ENCODE measurements at regions of chr2 and their contacts with region 1.

Region 1: GRCh38 chr2:86368161-86368824 is 30.9 kb upstream of the REEP1 start:
- DNase-seq: peak in 13 of 14 experiments; percentile 8 to 76 (median 28)
- ATAC-seq: peak; percentile 74
- H3K4me3 ChIP-seq: peak overlapping the region; percentile 9
- H3K4me3 Mint-ChIP-seq: peak overlapping the region; percentile 38
- H3K27ac ChIP-seq: no peak overlapping the region
- H3K27ac Mint-ChIP-seq: peak overlapping the region; percentile 22
- H3K4me1 ChIP-seq: peaks cover 32% of the 10 kb centered on the region
- H3K4me1 Mint-ChIP-seq: peaks cover 64% of the 10 kb centered on the region
- H3K27me3 ChIP-seq: no peaks in the 10 kb centered on the region
- H3K27me3 Mint-ChIP-seq: no peaks in the 10 kb centered on the region
- CTCF ChIP-seq: peak; percentile 70

Region 2: DNA sequence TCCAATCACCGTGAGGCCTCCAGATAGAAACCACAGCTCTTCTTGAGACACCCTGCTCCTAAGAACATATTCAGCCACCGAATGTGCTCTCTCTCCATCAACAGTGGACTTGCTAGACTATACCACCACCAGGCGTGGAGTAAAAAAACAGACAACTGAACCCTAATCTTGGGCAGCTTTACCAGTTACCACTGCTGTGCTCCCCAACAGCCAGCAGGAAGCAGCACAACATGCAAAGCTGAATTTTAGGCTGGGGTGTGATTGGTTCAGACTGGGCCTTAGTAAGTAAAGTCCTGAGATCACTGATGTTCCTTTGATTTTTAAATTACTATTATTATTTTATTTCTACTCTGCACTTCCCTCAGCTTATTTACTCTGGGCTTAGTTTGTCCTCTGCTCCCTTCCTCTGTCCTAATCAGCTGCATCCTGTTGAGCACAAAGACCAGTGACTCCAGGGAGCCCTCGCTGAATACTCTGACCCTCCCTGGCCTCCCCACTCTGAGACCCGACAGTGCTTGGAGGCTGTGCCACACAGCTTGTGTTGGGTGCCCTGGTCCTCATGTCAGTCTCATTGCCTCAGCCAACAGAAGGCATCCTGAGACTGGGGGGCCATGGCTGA is 147.1 kb before region 1 on chr2:
- CTCF ChIA-PET with region 1: interaction called, 3 read pairs
- POLR2A ChIA-PET with region 1: interaction called, 5 read pairs
- intact Hi-C with region 1: loop called (anchors 1 to 2 kb)
- DNase-seq: peak in 13 of 14 experiments; percentile 17 to 77 (median 47)
- ATAC-seq: peak; percentile 69
- H3K4me3 ChIP-seq: no peak overlapping the region
- H3K4me3 Mint-ChIP-seq: no peak overlapping the region
- H3K27ac ChIP-seq: no peak overlapping the region
- H3K27ac Mint-ChIP-seq: no peak overlapping the region
- H3K4me1 ChIP-seq: peaks cover 18% of the 10 kb centered on the region
- H3K4me1 Mint-ChIP-seq: peaks cover 28% of the 10 kb centered on the region
- H3K27me3 ChIP-seq: no peaks in the 10 kb centered on the region
- H3K27me3 Mint-ChIP-seq: no peaks in the 10 kb centered on the region
- CTCF ChIP-seq: peak; percentile 79

Region 3: GRCh38 chr2:86417961-86418360 is 49.7 kb after region 1 on chr2:
- CTCF ChIA-PET with region 1: no interaction called
- POLR2A ChIA-PET with region 1: no interaction called
- intact Hi-C with region 1: loop called in 1 of 2 experiments (anchors 10 kb)
- DNase-seq: no peak
- ATAC-seq: no peak
- H3K4me3 ChIP-seq: no peak overlapping the region
- H3K4me3 Mint-ChIP-seq: no peak overlapping the region
- H3K27ac ChIP-seq: no peak overlapping the region
- H3K27ac Mint-ChIP-seq: no peak overlapping the region
- H3K4me1 ChIP-seq: no peaks in the 10 kb centered on the region
- H3K4me1 Mint-ChIP-seq: no peaks in the 10 kb centered on the region
- H3K27me3 ChIP-seq: peaks cover 4 to 7% of the 10 kb centered on the region in 2 experiments
- H3K27me3 Mint-ChIP-seq: peaks cover 29% of the 10 kb centered on the region
- CTCF ChIP-seq: no peak

Region 4: GRCh38 chr2:86753606-86754005 is 385.3 kb after region 1 on chr2:
- CTCF ChIA-PET with region 1: no interaction called
- POLR2A ChIA-PET with region 1: no interaction called
- intact Hi-C with region 1: no loop called
- DNase-seq: no peak
- ATAC-seq: no peak
- H3K4me3 ChIP-seq: no peak overlapping the region
- H3K4me3 Mint-ChIP-seq: no peak overlapping the region
- H3K27ac ChIP-seq: no peak overlapping the region
- H3K27ac Mint-ChIP-seq: no peak overlapping the region
- H3K4me1 ChIP-seq: no peaks in the 10 kb centered on the region
- H3K4me1 Mint-ChIP-seq: peaks cover 23% of the 10 kb centered on the region
- H3K27me3 ChIP-seq: no peaks in the 10 kb centered on the region
- H3K27me3 Mint-ChIP-seq: no peaks in the 10 kb centered on the region
- CTCF ChIP-seq: no peak

Measured in CD4-positive, alpha-beta T cell (primary cell).